Activated CD4-positive, alpha-beta T cell treated with anti-CD3 and anti-CD28 coated beads for 36 hours (primary cell): ENCODE measurements at regions of chr5 and their contacts with region 1.

Region 1: DNA sequence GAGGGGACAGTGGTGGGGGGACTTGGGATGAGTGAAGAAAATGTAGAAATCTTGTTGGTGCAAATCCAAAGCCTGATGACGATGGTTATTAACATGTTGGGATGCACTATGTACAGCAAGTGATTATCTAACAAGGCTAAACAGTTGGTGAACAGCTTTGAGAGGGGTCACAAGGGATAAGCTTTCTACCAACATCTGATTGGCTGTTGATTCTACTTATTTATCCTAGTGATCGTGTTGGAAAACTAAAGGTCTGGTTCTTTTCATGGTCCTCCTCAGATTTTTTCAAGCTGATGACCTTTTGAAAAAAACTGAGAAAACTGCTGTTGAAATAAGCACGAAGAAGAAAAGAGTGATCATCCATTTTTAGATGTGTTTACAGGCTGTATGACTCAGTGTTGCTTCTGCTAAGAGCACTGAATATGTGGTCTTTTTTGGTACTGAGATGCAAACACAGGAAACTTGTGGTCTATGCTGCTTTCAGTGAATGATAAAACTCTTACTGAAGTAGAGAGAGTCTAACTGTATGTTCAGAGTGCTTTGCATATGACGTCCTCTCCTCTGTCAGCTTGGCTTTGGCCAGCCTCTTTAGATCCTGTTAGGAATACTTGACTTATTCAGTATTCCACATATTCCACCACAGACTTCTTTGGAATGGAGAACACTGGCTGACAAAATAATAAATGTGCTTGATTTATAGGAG is 174.8 kb downstream of the SLF1 start:
- DNase-seq: peak; percentile 33
- ATAC-seq: peak; percentile 97
- H3K4me3 Mint-ChIP-seq: peak overlapping the region; percentile 58
- H3K27ac Mint-ChIP-seq: peak overlapping the region; percentile 93
- H3K4me1 Mint-ChIP-seq: peaks cover 44% of the 10 kb centered on the region
- H3K27me3 Mint-ChIP-seq: no peaks in the 10 kb centered on the region

Region 2: GRCh38 chr5:94111209-94112004 is 681.9 kb before region 1 on chr5:
- CTCF ChIA-PET with region 1: no interaction called
- POLR2A ChIA-PET with region 1: no interaction called
- intact Hi-C with region 1: loop called (anchors 5 kb)
- DNase-seq: peak; percentile 96
- ATAC-seq: peak; percentile 97
- H3K4me3 Mint-ChIP-seq: peak overlapping the region; percentile 91
- H3K27ac Mint-ChIP-seq: peak overlapping the region; percentile 93
- H3K4me1 Mint-ChIP-seq: peaks cover 39% of the 10 kb centered on the region
- H3K27me3 Mint-ChIP-seq: no peaks in the 10 kb centered on the region

Region 3: GRCh38 chr5:94700592-94700991 is 92.7 kb before region 1 on chr5:
- CTCF ChIA-PET with region 1: no interaction called
- POLR2A ChIA-PET with region 1: no interaction called
- intact Hi-C with region 1: loop called in 1 of 2 experiments (anchors 2 kb)
- DNase-seq: no peak
- ATAC-seq: peak; percentile 88
- H3K4me3 Mint-ChIP-seq: no peak overlapping the region
- H3K27ac Mint-ChIP-seq: peak overlapping the region; percentile 53
- H3K4me1 Mint-ChIP-seq: peaks cover 4% of the 10 kb centered on the region
- H3K27me3 Mint-ChIP-seq: no peaks in the 10 kb centered on the region

Region 4: GRCh38 chr5:95081500-95081960 is 288.3 kb after region 1 on chr5:
- CTCF ChIA-PET with region 1: no interaction called
- POLR2A ChIA-PET with region 1: no interaction called
- intact Hi-C with region 1: loop called in 1 of 2 experiments (anchors 5 kb)
- DNase-seq: peak; percentile 56
- ATAC-seq: peak; percentile 99
- H3K4me3 Mint-ChIP-seq: peak overlapping the region; percentile 30
- H3K27ac Mint-ChIP-seq: no peak overlapping the region
- H3K4me1 Mint-ChIP-seq: peaks cover 13% of the 10 kb centered on the region
- H3K27me3 Mint-ChIP-seq: peaks cover 7% of the 10 kb centered on the region